ENCODE measurements at regions of chr13 and their contacts with region 1.

Region 1: GRCh38 chr13:43510956-43511901 is 275.5 kb downstream of the ENOX1 start:
- DNase-seq: no peak
- ATAC-seq: peak; percentile 23
- H3K4me3 ChIP-seq: peak overlapping the region in 1 of 2 donors; percentile 26
- H3K27ac ChIP-seq: peak overlapping the region in 1 of 2 donors; percentile 90
- H3K4me1 ChIP-seq: peaks cover 4 to 13% of the 10 kb centered on the region in 2 donors
- H3K27me3 ChIP-seq: no peaks in the 10 kb centered on the region

Region 2: DNA sequence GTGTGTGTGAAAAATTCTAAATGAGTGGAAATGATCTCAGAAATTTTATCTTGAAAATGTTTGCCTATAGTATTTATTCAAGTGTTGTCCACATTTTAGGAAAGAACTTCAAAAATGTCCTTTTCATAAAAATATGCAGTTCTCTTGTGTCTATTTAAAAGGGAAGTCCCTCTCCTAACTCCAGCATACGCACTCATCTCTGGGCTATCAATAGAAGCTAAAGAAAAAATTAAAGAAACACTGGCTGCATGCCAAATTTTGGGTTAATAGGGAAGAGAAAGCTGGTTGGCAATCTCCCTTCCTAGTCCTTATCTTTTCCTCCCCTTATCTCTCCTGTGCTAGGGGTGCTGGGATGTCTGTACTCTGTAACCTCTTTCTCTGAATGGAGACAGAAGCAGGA is 37.8 kb before region 1 on chr13:
- intact Hi-C with region 1: loop called in 1 of 2 experiments (anchors 5 kb)
- DNase-seq: no peak
- ATAC-seq: no peak
- H3K4me3 ChIP-seq: no peak overlapping the region
- H3K27ac ChIP-seq: no peak overlapping the region
- H3K4me1 ChIP-seq: peaks cover 0 to 4% of the 10 kb centered on the region in 2 donors
- H3K27me3 ChIP-seq: no peaks in the 10 kb centered on the region